ENCODE measurements at regions of chr6 and their contacts with region 1.

Region 1: DNA sequence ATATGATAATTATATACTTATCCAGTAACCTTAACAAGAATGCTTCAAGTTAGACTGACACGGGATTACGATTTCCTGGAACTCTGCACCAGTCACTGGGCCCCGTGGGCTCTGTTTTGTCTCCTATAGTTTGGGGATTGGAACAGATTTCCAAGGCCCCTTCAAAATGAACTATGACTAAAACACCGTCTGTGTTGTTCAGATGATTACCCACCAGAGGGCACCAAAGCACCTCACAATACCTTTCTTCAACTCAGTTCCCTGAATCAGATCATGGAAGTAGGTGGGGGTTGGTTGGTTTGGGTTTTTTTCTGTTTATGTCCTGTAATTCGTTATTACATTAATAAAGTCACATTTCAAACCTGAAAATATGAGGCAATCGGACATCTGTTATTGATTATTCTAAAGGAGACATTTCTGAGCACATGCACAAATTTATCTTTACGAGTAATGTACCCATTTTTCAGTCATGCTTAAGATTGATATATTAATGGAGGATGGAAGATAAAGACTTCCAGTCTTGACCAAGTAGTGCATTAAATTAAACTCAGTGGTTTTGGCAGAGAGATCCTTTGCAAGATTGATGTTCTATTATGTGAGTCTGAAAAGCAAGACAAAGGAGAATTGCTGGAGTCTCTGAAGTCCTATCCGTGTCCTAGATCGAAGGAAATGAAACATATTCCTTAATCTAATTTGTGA is 112.0 kb upstream of the COL21A1 start:
- DNase-seq: peak; percentile 84
- ATAC-seq: peak; percentile 68
- H3K4me3 ChIP-seq: no peak overlapping the region
- H3K27ac ChIP-seq: no peak overlapping the region
- H3K4me1 ChIP-seq: peaks cover 32% of the 10 kb centered on the region
- H3K27me3 ChIP-seq: no peaks in the 10 kb centered on the region
- CTCF ChIP-seq: peak; percentile 89

Region 2: DNA sequence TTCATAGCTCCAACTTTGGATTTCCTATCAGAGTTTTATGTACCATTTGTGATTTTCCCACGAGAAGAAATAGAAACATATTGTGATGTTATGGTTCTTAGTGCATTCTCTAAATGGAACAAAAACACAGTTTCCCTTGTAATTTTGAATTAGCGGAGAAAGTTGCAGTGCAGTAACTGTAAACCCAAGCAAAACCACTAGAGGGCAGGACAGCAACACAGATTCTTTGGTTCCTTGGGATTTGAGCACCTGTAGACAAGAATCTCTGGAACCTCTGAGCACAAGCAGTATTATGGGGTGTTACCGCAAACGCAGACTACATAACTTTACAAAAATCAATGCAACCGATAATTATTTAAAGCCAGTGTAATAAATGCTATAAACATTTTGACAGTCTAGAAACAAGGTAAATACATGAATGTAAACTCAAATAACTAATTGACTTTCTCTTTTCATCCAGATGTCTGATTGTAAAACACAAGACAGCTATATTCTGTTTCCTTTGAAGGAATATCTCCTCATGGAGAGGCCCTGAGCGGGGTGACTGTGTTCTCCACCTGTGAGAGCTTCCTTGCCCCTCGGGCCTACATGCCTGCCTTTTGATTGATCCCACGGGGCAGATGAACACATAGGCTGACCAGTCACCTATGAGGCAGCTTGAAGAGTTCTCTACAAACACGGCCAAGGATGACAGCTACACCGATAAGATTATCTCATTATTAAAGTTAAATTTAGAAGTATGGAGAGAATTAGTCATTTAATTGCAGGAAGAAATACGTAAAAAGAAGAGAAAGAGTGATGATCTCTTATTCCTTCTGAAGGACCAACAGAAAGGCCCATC is 44.4 kb before region 1 on chr6:
- CTCF ChIA-PET with region 1: no interaction called
- POLR2A ChIA-PET with region 1: no interaction called
- intact Hi-C with region 1: loop called (anchors 1 kb)
- DNase-seq: peak; percentile 81
- ATAC-seq: peak; percentile 72
- H3K4me3 ChIP-seq: peak overlapping the region; percentile 18; the same call in 1 of the 2 replicates
- H3K27ac ChIP-seq: no peak overlapping the region
- H3K4me1 ChIP-seq: peaks cover 5% of the 10 kb centered on the region; the same call in 1 of the 2 replicates
- H3K27me3 ChIP-seq: no peaks in the 10 kb centered on the region
- CTCF ChIP-seq: peak; percentile 96

Region 3: GRCh38 chr6:56399250-56399671 is 39.9 kb after region 1 on chr6:
- CTCF ChIA-PET with region 1: no interaction called
- POLR2A ChIA-PET with region 1: no interaction called
- intact Hi-C with region 1: no loop called
- DNase-seq: peak; percentile 76
- ATAC-seq: peak; percentile 78
- H3K4me3 ChIP-seq: no peak overlapping the region
- H3K27ac ChIP-seq: 0 out of 2 replicates have a peak overlapping the region, but pooled peaks have one; percentile 13
- H3K4me1 ChIP-seq: peaks cover 25% of the 10 kb centered on the region
- H3K27me3 ChIP-seq: no peaks in the 10 kb centered on the region
- CTCF ChIP-seq: no peak

Region 4: DNA sequence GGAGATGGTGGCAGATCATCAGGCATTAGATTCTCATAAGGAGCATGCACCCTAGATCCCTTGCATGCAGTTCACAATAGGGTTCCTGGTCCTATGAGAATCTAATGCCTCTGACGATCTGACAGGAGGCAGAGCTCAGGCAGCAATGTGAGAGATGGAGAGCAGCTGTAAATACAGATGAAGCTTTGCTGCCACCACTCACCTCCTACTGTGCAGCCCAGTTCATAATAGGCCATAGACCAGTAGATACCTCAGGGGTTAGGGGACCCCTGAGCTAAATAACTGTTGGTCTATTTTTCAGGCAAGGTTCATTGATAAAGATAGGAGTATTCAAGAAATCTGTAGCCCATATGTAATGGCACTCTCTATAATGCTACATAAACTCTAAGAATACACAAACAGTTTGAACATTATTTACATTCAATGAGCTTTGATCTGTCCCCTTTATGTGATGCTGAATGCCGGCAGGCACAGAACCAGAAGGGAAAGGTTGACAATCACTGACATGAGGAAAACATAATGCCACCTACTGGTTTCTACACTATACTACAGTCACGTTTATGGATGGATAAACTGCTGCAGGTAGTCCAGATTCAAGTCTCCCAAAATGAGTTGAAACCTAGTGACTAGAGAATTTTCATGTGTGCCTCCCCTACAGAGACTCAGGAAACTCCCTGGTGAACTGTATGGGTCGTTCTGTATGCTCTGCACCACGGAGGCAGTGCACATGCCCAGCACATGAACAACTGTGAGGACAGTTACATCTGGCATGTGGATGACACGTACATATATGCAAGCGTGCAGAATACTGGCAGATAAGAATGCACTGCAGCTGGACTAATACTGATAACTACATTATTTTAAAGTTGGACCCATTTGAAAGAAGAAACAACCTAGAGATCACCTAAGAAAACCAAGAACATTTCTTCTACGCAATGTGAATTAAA is 211.3 kb after region 1 on chr6:
- CTCF ChIA-PET with region 1: no interaction called
- POLR2A ChIA-PET with region 1: no interaction called
- intact Hi-C with region 1: loop called (anchors 2 kb)
- DNase-seq: peak; percentile 60
- ATAC-seq: peak; percentile 72
- H3K4me3 ChIP-seq: no peak overlapping the region
- H3K27ac ChIP-seq: no peak overlapping the region
- H3K4me1 ChIP-seq: no peaks in the 10 kb centered on the region
- H3K27me3 ChIP-seq: no peaks in the 10 kb centered on the region
- CTCF ChIP-seq: peak; percentile 73

Region 5: DNA sequence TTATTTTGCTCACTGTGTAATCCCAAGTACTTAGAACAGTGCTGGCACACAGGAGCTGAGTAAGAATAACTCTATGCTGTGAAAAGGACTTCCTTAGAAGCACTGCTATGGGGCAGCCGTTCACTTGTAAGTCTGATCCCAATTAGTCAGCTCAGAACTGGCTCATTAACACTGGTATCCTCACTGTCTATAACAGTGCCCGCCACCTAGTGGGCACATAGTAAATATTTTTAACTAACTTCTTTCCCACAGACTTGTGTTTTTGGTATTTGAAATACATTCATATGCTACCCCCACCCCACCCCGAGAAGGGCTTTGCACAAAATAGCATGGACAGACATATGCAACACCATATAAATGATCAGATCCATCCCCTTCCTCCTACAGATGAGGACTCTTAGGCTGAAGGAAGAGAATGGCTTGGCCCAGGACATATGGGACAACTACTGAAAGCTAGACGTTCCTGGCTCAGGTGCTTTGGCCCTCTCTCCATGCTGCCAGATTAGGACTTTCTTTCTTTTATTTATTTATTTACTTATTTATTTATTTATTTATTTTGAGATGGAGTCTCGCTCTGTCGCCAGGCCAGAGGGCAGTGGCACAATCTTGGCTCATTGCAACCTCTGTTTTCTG is 236.3 kb after region 1 on chr6:
- CTCF ChIA-PET with region 1: interaction called, 5 read pairs
- POLR2A ChIA-PET with region 1: no interaction called
- intact Hi-C with region 1: loop called (anchors 1 kb)
- DNase-seq: peak; percentile 37
- ATAC-seq: peak; percentile 73
- H3K4me3 ChIP-seq: no peak overlapping the region
- H3K27ac ChIP-seq: no peak overlapping the region
- H3K4me1 ChIP-seq: no peaks in the 10 kb centered on the region
- H3K27me3 ChIP-seq: no peaks in the 10 kb centered on the region
- CTCF ChIP-seq: peak; percentile 80

Region 6: DNA sequence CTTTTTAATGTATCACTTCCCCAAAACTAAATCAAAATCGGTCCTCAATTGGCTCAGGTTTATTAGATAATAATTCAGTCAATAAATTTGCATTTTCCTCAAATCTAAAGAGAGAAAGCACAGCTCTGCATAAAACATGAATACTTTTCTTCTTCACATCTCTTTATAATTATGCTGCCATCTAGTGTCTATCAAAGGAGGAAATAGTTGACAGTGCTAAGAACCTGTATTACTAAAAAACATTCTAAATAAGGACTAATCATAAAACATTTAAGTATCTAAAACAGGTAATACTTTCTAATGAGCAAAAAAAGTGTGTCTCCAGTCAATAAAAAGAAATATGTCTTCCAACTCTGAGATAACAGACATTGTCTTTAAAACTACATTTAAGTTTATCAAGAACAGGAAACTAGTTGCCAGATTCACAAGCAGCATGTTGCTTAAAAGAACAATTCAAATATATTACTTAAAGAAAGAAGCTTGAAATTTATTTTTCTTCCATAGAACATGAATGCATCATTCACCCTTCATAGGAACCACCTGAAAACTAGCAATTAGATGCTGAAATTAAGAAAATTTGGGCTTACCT is 339.8 kb after region 1 on chr6:
- CTCF ChIA-PET with region 1: no interaction called
- POLR2A ChIA-PET with region 1: no interaction called
- intact Hi-C with region 1: loop called (anchors 5 kb)
- DNase-seq: peak; percentile 73
- ATAC-seq: peak; percentile 51
- H3K4me3 ChIP-seq: no peak overlapping the region
- H3K27ac ChIP-seq: no peak overlapping the region
- H3K4me1 ChIP-seq: peaks cover 17% of the 10 kb centered on the region
- H3K27me3 ChIP-seq: no peaks in the 10 kb centered on the region
- CTCF ChIP-seq: peak; percentile 84

Measured in PC-3 (cell line).